CD4-positive, alpha-beta memory T cell (primary cell): ENCODE measurements at regions of chr10 and their contacts with region 1.

Region 1: GRCh38 chr10:14500172-14500765 is 169.5 kb upstream of the FRMD4A start:
- DNase-seq: no peak
- H3K4me3 ChIP-seq: no peak overlapping the region
- H3K4me3 Mint-ChIP-seq: no peak overlapping the region
- H3K27ac ChIP-seq: no peak overlapping the region
- H3K27ac Mint-ChIP-seq: peak overlapping the region in 4 of 7 donors; percentile 7 to 72 (median 38)
- H3K4me1 ChIP-seq: peaks cover 6% of the 10 kb centered on the region
- H3K4me1 Mint-ChIP-seq: peaks cover 5 to 12% (median 7%) of the 10 kb centered on the region in 4 donors
- H3K27me3 ChIP-seq: no peaks in the 10 kb centered on the region
- H3K27me3 Mint-ChIP-seq: peaks cover 0 to 2% of the 10 kb centered on the region in 2 donors

Region 2: DNA sequence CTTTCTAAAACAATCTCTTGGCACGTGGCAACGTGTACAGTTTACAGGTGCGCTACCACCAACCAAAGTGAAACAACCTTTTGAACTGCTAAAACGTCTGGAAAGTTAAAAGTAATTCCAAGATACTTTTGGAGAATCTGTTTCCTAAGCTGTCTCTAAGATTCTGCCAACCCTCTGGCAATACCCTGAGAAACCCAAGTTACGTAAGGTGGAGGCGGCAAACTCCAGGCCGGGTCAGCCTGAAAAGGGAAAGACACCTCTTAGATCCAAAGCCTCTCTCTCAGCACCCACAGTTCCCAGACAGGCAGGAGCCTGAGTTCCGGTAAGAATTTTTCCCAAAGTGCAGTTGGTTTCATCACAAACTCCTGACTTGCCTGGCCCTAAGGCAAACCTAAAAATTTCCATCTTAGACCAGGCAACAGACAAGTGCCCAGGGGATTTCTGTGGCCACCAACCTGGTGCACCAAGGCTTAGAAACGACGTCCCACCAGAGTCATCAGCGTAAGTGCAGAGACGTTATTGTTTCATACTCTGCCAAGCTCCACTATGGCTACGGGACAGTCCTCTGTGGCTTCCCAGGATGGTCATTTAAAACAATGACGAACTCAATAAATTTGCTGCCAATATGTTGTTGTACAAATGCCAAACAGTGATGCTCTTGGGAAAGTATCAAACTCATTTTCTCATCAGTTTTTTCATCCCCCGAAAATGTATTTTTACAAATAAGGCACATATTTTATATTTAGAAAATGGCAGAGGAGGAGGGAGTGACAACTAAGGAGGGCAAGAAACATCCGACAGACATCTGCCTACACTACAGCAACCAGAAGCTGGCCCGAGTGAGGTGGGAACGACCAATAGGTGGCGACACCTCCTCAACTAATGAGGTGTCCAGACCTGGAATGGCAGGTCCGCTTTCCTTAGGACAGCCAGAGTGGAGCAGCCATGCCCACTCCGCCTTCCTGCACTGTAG is 36.3 kb after region 1 on chr10:
- CTCF ChIA-PET with region 1: interaction called, 11 read pairs
- POLR2A ChIA-PET with region 1: no interaction called
- intact Hi-C with region 1: no loop called
- DNase-seq: peak in 1 of 5 donors; percentile 30
- H3K4me3 ChIP-seq: no peak overlapping the region
- H3K4me3 Mint-ChIP-seq: peak overlapping the region in 1 of 8 donors; percentile 15
- H3K27ac ChIP-seq: peak overlapping the region; percentile 27
- H3K27ac Mint-ChIP-seq: peak overlapping the region; percentile 15 to 94 (median 83)
- H3K4me1 ChIP-seq: peaks cover 91% of the 10 kb centered on the region
- H3K4me1 Mint-ChIP-seq: peaks cover 71 to 100% (median 87%) of the 10 kb centered on the region in 4 donors
- H3K27me3 ChIP-seq: no peaks in the 10 kb centered on the region
- H3K27me3 Mint-ChIP-seq: no peaks in the 10 kb centered on the region

Region 3: GRCh38 chr10:14556285-14556956 is 56.2 kb after region 1 on chr10:
- CTCF ChIA-PET with region 1: interaction called, 11 read pairs
- POLR2A ChIA-PET with region 1: no interaction called
- intact Hi-C with region 1: loop called (anchors 1 kb)
- DNase-seq: peak in 4 of 5 donors; percentile 34 to 64 (median 47)
- H3K4me3 ChIP-seq: no peak overlapping the region
- H3K4me3 Mint-ChIP-seq: peak overlapping the region; percentile 53 to 87 (median 75)
- H3K27ac ChIP-seq: peak overlapping the region; percentile 65
- H3K27ac Mint-ChIP-seq: peak overlapping the region; percentile 93 to 97 (median 94)
- H3K4me1 ChIP-seq: peaks cover 100% of the 10 kb centered on the region
- H3K4me1 Mint-ChIP-seq: peaks cover 80 to 99% (median 89%) of the 10 kb centered on the region in 4 donors
- H3K27me3 ChIP-seq: no peaks in the 10 kb centered on the region
- H3K27me3 Mint-ChIP-seq: no peaks in the 10 kb centered on the region

Region 4: DNA sequence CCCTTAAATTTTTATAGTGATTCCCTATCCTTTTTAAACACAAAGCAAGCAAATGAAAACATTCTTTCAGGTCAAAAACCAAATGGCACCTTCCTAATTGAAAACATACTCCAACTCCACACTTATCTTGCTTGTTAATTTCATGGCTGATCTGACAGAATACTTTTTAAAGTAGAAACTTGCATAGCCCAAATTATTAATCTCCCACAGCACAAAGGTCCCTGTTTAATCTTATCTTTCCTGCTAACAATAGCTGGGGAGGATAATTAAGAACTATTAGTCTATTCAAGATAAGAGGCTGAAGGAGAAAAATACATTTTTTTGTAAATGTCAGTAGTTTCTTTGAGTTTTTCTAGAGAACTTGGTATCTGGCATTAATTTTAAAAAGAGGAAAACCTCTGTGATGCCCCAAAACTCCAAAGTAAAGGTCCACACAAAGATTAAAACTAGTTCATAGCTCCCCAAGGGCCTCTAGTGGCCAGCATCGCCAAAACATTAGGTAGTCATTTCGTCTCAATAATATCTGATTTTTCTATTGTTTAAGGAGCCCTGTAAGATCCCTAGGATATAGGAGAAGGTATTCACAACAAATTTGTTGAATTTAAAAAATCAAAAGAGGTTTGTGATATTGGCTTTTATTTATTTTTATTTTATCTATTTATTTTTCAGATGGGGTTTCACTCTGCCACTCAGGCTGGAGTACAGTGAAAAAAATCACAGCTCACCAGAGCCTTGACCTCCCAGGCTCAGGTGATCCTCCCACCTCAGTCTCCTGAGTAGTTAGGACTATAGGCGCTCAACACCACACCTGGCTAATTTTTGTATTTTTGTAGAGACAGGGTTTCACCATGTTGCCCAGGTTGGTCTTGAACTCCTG is 322.8 kb after region 1 on chr10:
- CTCF ChIA-PET with region 1: interaction called, 30 read pairs
- POLR2A ChIA-PET with region 1: no interaction called
- intact Hi-C with region 1: loop called (anchors 1 kb)
- DNase-seq: peak in 4 of 5 donors; percentile 39 to 56 (median 41)
- H3K4me3 ChIP-seq: no peak overlapping the region
- H3K4me3 Mint-ChIP-seq: no peak overlapping the region
- H3K27ac ChIP-seq: no peak overlapping the region
- H3K27ac Mint-ChIP-seq: peak overlapping the region in 2 of 7 donors; percentile 18 to 72
- H3K4me1 ChIP-seq: no peaks in the 10 kb centered on the region
- H3K4me1 Mint-ChIP-seq: peaks cover 0 to 14% (median 4%) of the 10 kb centered on the region in 4 donors
- H3K27me3 ChIP-seq: no peaks in the 10 kb centered on the region
- H3K27me3 Mint-ChIP-seq: no peaks in the 10 kb centered on the region

Region 5: DNA sequence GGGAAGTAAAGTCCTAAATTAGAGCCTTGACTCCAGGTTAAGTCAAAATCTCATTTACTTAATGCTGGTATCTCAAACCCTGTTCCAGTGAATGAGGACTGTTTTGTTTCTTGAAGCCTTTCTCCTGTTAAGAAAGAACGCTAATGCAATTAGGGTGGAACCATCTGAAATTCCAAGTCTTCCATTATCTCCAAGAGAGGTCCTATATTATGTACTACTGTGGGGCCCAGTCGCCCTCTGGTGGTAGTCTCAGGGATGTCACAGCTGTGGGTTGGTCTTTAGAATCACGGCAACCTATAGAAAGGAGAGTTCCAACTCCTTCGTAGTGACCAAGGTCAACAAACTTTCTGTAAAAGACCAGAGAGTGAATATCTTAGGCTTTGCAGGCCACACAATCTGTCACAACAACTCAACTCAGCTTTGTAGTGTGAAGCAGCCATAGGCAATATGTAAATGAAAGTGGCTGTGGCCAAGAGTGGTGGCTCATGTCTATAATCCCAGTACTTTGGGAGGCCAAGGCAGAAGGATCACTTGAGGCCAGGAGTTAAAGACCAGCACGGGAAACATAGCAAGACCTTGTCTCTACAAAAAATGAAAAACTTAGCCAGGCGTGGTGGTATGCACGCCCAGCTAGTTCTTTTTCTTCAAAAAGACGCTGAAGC is 606.2 kb after region 1 on chr10:
- CTCF ChIA-PET with region 1: interaction called, 3 read pairs
- POLR2A ChIA-PET with region 1: no interaction called
- intact Hi-C with region 1: loop called (anchors 2 kb)
- DNase-seq: peak; percentile 55 to 68 (median 62)
- H3K4me3 ChIP-seq: no peak overlapping the region
- H3K4me3 Mint-ChIP-seq: peak overlapping the region in 3 of 8 donors; percentile 11 to 48 (median 45)
- H3K27ac ChIP-seq: no peak overlapping the region
- H3K27ac Mint-ChIP-seq: peak overlapping the region; percentile 72 to 85 (median 76)
- H3K4me1 ChIP-seq: peaks cover 4% of the 10 kb centered on the region
- H3K4me1 Mint-ChIP-seq: peaks cover 4 to 9% (median 7%) of the 10 kb centered on the region in 4 donors
- H3K27me3 ChIP-seq: no peaks in the 10 kb centered on the region
- H3K27me3 Mint-ChIP-seq: no peaks in the 10 kb centered on the region